ENCODE measurements at regions of chr5 and their contacts with region 1.

Region 1: GRCh38 chr5:43137326-43137725 is 16.6 kb downstream of the ZNF131 start:
- DNase-seq: no peak
- H3K4me3 Mint-ChIP-seq: no peak overlapping the region
- H3K27ac Mint-ChIP-seq: no peak overlapping the region
- H3K4me1 Mint-ChIP-seq: peaks cover 33% of the 10 kb centered on the region
- H3K27me3 Mint-ChIP-seq: no peaks in the 10 kb centered on the region

Region 2: DNA sequence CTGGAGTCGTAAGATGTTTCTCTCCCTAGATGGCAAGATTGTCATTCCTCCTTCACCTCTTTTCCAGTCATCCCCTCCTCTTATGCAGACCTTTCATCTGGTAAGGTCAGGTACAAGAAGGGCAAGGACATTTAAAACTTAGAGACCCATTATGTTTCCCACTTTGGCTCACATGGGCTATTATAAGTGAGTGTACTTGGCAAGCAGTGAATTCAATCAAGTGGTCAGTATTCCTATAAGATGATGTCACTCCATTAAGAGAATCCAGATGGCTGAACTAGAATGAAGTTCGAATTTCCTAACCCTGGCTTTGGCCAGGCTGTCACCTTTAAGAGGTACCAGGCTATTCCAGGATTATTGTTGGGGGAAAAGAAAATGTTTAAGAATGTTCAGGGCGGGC is 15.6 kb after region 1 on chr5:
- CTCF ChIA-PET with region 1: interaction called, 12 read pairs
- POLR2A ChIA-PET with region 1: no interaction called
- DNase-seq: no peak
- H3K4me3 Mint-ChIP-seq: no peak overlapping the region
- H3K27ac Mint-ChIP-seq: no peak overlapping the region
- H3K4me1 Mint-ChIP-seq: peaks cover 12% of the 10 kb centered on the region
- H3K27me3 Mint-ChIP-seq: no peaks in the 10 kb centered on the region

Measured in activated CD4-positive, alpha-beta T cell treated with anti-CD3 and anti-CD28 coated beads, Interleukin-2, amount 10 ng/mL, durations not matched to agents 7 days and 5 days (primary cell).